Posterior vena cava (tissue), 2 donors: ENCODE measurements at regions of chrX and their contacts with region 1.

Region 1: DNA sequence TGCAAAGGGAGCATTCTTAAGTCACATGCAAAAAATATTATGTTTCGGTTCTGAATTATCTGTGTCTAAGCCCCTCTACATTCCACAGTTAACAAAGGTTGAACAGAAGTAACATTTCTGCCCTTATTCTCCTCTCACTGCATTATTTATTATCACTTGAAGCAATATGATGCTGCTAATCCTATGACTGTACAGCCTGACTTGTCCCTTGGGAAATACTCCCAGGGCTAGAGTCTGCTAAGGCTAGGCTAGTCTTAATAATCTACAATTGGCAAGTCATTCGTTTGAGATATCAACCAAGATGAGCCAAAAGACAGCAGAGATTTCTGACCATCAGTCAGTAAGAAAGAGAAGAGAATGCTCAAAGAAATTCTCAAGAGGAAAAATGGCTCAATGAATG is 226.9 kb upstream of the HCCS start:
- DNase-seq: no peak

Region 2: DNA sequence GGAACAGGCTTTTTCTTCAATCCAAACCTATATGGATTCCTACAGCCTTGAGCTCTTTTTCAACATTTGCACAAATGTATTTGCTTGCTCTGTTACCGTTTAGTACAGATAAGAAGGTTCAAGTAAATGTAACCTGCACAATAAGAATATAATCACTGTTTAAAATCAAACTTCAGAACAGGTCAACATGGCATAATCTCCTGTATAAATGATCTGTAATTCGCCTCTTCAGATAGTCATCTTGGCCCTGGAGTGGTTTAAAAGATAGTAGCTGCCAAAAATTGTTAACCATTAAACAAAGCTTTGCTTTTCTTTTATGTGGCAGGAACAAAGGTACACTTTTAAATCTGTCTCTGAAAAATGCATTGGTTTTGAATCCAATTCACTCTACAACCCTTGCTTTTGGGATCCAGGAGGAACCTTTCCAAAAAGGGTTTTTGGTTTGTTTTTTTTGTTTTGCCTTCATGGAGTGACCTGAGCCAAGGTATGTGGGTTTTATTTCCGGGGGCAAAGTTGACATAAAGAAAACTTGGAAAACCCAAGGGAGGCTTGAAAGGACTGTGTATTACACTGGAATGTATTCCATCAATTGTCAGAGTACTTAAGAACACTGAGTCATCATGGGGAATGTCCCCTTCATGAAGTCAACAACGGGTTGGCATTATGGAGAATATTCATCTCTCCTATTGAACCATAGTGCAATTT is 16.5 kb after region 1 on chrX:
- intact Hi-C with region 1: loop called in 1 of 2 experiments (anchors 1 kb)
- DNase-seq: no peak